HEK293T (cell line): ENCODE measurements at regions of chr4 and their contacts with region 1.

Region 1: GRCh38 chr4:184460499-184461285 is 13.7 kb downstream of the IRF2 start:
- DNase-seq: no peak

Region 2: DNA sequence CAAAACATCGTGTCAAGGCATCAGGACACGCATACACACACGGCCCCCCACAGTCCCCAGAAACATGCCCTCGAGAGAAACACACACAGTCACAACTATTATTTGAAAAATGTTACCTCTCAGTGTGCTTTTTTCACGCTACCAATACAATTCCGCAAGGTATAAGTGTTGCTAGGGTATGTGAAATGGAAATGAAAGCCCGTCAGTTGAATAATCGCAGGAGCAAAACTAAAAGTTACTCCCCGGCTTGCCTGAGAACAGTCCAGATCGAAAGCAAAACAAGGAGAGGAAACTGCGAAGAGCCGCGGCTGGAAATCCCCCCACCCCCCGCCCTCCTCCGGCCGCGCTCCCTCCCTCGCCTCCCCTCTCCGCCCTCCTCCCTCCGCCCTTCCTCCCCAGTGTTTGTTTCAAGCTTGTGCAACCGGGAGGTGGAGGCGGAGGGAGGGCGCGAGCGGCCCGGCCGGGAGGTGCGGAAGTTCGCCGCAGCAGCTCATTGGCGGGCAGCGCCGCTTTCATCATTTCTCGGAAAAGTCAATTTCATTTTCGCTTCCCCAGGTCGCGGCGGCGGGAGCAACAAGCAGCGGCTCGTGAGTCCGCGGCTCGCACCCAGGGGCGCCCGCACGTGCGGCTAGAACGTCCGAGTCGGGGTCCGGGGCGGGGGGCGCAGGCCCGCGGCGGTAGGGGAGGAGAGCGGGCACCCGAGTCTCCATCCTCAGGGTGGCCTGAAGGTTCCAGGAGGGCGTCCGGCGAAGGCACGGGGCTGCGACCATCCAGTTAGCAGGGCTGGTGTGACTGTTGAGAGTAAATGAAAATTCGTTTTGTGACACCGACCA is 13.8 kb after region 1 on chr4 and contains the start of gene IRF2:
- CTCF ChIA-PET with region 1: no interaction called
- POLR2A ChIA-PET with region 1: interaction called, 16 read pairs
- DNase-seq: peak; percentile 80

Region 3: DNA sequence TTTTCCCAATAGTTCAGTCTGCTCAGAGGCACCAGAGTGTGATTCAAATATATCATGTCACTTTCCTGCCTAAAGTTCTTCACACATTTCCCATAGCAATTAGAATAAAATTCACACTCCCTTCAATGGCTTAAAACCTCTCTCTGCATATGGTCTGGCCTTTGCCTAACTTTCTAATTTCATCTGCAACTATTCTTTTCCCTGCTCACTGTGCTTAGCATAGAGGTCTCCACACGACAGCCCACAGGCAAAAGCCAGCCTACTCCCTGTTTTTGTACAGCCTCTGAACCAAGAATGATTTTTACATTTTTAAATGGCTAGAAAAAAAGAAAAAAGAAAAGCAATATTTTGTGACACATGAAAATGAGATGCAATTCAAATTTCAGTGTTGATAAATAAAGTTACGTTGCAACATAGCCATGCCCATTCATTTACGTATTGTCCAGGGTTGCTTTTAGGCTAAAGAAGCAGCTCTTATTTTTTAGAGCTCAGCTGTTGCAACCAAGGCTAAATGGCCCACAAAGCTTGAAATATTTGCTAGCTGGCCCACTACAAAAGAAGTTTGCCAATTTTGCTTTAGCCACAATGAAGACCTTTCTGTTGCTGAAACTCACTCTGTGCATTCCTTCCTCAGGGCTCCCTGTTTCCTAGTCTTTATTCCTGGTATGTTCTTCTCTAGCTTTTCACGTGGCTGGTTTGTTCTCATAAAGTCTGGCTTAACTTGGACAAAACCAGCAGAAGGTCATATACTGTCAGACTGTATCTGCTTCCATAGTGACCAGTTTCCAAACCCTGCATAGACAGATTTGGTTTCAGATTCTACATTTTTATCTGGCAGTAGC is 40.3 kb after region 1 on chr4:
- CTCF ChIA-PET with region 1: no interaction called
- POLR2A ChIA-PET with region 1: no interaction called
- DNase-seq: no peak